Left cardiac atrium (tissue), 4 donors: ENCODE measurements at regions of chrX and their contacts with region 1.

Region 1: GRCh38 chrX:12974796-12975669 is at the start of gene TMSB4X:
- DNase-seq: peak; percentile 88
- ATAC-seq: peak; percentile 84 to 85
- total RNA-seq, gene TMSB4X: 1,546 to 1,715 TPM

Region 2: GRCh38 chrX:13013363-13014110 is 38.5 kb after region 1 on chrX:
- intact Hi-C with region 1: no loop called
- DNase-seq: peak; percentile 39
- ATAC-seq: peak; percentile 70 to 84

Region 3: DNA sequence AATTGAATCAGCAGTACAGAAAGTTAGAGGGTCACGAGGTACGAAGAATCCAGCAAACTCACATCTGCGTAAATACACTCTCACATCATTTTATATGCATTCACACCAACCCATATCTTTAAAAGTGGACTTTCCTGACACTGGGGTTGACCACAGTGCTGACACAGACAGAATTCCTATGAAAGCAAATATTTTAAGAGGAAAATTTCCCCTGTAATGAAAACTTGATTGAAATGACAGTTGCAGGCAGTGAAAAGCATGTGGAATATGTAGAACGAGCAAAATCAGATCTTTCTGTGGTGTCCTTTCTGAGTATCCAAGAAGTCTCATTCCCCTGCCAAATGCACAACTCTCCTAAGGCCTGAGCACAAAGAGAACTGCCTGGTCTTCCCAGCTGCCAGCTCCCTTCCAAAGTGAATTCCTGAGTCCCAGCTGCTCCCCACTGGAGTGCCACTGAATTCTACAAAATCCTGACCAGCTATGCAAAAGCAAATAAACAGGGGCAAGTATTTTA is 119.9 kb after region 1 on chrX:
- intact Hi-C with region 1: loop called in 1 of 2 experiments (anchors 5 kb)
- DNase-seq: no peak
- ATAC-seq: peak; percentile 29 to 53

Region 4: GRCh38 chrX:13123857-13124345 is 148.9 kb after region 1 on chrX:
- intact Hi-C with region 1: loop called in 1 of 2 experiments (anchors 5 kb)
- DNase-seq: no peak
- ATAC-seq: no peak